Psoas muscle (tissue), 8 donors: ENCODE measurements at regions of chr5 and their contacts with region 1.

Region 1: DNA sequence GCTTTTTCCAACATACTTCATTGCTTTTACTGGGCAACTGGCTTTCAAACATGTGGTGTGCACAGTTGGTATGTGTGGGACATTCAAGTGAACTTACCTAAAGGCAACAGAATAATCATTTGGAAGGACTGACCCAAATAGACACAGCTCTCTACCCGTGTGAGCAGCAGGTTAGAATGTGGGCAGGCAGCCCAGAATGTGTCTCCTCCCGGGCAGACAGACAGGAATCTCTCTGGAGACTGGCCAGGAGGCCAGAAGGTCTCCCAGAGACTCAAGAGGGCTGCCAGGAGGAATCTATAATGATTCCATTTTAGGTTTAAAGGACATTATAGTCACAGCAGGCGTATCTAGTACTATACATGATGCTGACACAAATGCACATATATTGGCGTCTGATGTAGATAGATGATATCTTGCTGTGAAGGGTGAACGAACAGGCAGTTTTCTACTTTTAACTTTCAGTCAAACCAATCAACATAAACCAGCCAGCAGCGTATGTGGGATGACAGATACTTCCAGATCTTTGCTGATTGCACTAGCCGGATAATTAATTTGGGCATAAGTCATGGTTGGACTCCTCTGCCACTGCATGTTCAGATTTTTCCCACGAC is 297.4 kb upstream of the ZNF608 start:
- DNase-seq: peak; percentile 34 to 59
- ATAC-seq: peak; percentile 80 to 95 (median 86)
- H3K4me3 ChIP-seq: no peak overlapping the region
- H3K27ac ChIP-seq: peak overlapping the region; percentile 49
- H3K4me1 ChIP-seq: peaks cover 26% of the 10 kb centered on the region
- H3K27me3 ChIP-seq: no peaks in the 10 kb centered on the region
- CTCF ChIP-seq: no peak

Region 2: GRCh38 chr5:124912638-124913328 is 131.1 kb before region 1 on chr5:
- intact Hi-C with region 1: loop called in 1 of 2 experiments (anchors 5 kb)
- DNase-seq: peak; percentile 69 to 90
- ATAC-seq: peak; percentile 99 to 100 (median 100)
- H3K4me3 ChIP-seq: no peak overlapping the region
- H3K27ac ChIP-seq: peak overlapping the region; percentile 50
- H3K4me1 ChIP-seq: peaks cover 5% of the 10 kb centered on the region
- H3K27me3 ChIP-seq: no peaks in the 10 kb centered on the region
- CTCF ChIP-seq: peak; percentile 16

Region 3: DNA sequence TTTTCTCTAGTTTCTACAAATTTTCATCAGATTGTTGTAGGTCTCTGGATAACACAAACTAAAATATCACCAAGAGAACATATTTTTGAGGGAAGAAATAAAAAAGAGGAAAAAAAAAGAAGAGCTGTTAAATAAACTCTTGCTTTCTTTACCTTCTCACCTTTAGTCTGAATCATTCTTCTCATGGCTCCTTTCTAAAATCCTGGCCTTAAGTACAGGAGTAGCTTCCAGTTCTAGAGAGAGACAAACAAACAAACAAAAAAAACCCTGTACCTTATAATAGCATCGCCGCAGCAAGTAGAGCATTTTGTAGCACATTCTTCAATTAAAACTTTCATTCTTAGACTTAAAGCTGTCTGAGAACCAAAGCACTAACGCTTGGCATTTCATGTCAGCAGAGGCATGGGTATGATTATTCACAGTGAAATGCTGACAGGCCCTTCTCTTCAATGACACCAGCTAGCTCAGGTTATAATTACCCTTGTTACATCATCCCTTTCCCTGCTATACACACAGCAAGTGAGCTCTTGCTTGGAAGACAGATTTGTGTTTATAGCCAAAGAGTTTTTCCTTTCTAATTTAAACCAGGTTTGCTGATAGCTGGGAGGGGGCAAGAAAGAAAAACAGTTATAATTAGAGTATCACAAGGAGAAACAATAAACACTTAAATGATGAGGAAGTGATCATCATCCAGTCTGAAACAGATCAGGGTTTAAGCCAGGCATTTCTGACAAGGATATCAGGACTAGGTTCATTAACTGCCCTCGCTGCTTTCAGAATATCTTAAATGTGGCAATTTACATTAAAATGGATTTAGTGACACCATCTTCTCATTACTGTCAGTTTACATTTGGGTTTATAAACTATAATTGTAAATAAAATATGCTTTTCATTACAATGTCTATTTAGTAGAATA is 213.4 kb after region 1 on chr5:
- intact Hi-C with region 1: loop called in 1 of 2 experiments (anchors 10 kb)
- DNase-seq: no peak
- ATAC-seq: peak; percentile 97 to 100 (median 99)
- H3K4me3 ChIP-seq: peak overlapping the region; percentile 41
- H3K27ac ChIP-seq: peak overlapping the region; percentile 81
- H3K4me1 ChIP-seq: peaks cover 13% of the 10 kb centered on the region
- H3K27me3 ChIP-seq: no peaks in the 10 kb centered on the region
- CTCF ChIP-seq: no peak